ENCODE measurements at regions of chr12 and their contacts with region 1.

Region 1: GRCh38 chr12:109385339-109386067 is 37.8 kb downstream of the MYO1H start:
- DNase-seq: peak; percentile 32
- ATAC-seq: peak; percentile 71 to 90

Region 2: GRCh38 chr12:108803428-108804105 is 581.9 kb before region 1 on chr12:
- intact Hi-C with region 1: no loop called
- DNase-seq: peak; percentile 73
- ATAC-seq: peak; percentile 60 to 73

Region 3: DNA sequence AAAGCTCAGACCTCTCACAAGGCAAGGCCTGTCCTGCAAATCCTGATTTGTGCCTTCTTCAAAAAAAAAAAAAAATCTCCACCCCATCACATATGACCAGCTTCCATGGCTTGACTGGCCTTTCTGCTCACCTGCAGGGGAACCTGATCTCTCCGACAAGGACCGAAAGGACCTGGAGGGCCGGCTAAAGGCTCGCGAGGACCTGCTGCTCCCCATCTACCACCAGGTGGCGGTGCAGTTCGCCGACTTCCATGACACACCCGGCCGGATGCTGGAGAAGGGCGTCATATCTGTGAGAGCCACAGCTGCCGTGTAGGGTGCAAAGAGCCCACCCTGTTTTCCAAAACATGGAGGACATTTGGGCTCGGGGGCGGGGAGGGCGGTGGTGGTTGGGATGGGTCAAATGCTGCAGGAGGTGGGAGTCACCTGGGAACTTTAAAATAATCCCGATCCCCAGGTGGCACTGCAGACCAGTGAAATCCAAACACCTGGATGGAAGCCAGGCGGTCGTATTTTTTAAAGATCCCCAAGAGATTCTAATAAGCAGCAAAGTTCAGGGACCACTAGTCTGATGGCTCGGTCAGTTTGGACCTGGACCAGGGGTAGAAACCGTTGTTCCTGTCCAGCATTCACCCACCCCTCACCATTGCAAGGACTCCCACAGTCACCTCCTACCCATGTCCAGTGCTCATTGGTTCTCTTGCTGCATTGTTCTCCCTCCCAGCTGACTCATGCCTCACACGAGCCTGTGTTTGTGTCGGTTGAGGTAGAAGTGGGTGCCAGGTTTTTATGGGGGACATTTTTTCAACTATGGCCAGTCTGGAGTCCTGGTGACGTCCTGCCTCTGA is 121.2 kb before region 1 on chr12:
- intact Hi-C with region 1: loop called (anchors 2 to 5 kb)
- DNase-seq: peak; percentile 78
- ATAC-seq: peak; percentile 42 to 81

Measured in left cardiac atrium (tissue), 4 donors.